Caco-2 (cell line): ENCODE measurements at regions of chr13 and their contacts with region 1.

Region 1: GRCh38 chr13:38763439-38764381 is 76.8 kb downstream of the FREM2 start:
- DNase-seq: peak; percentile 57 to 70
- H3K4me3 ChIP-seq: 0 out of 2 replicates have a peak overlapping the region, but pooled peaks have one; percentile 9
- H3K4me3 Mint-ChIP-seq: peak overlapping the region; percentile 64
- H3K27ac Mint-ChIP-seq: peak overlapping the region; percentile 29
- H3K4me1 ChIP-seq: peaks cover 17% of the 10 kb centered on the region
- H3K4me1 Mint-ChIP-seq: peaks cover 29% of the 10 kb centered on the region
- H3K27me3 ChIP-seq: no peaks in the 10 kb centered on the region
- H3K27me3 Mint-ChIP-seq: no peaks in the 10 kb centered on the region
- CTCF ChIP-seq: peak; percentile 72 to 76

Region 2: DNA sequence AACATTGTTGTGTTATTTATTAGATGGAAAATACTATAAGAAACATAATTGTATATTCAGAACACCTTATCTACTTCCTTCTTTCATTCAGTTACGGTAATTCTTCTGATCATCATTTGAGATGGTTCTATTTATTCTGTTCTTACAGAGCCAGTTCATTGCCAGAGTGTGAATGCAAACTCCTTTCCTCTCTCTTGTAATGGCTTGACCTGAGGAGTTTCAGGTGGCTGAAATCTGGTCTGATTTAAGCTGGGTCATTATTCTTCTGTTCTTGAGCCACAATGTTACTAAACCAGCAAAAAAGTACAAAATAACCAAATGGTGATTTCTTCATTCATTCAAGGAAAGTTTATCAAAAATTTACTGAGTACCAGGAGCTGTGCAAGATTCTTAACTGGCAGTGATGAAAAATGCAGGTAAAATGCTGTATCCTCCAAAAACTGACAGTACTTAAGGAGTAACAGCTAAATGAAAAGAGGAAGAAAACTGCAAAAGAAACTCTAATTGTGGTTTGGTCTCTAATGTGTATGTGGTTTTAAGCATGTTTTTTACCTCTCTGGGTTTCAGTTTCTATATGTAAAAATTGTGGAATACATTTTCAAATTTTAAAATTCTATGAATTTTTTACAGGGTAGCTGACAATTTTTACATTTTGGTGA is 596.4 kb before region 1 on chr13:
- CTCF ChIA-PET with region 1: no interaction called
- POLR2A ChIA-PET with region 1: no interaction called
- intact Hi-C with region 1: no loop called
- DNase-seq: no peak
- H3K4me3 ChIP-seq: no peak overlapping the region
- H3K4me3 Mint-ChIP-seq: no peak overlapping the region
- H3K27ac Mint-ChIP-seq: no peak overlapping the region
- H3K4me1 ChIP-seq: no peaks in the 10 kb centered on the region
- H3K4me1 Mint-ChIP-seq: no peaks in the 10 kb centered on the region
- H3K27me3 ChIP-seq: no peaks in the 10 kb centered on the region
- H3K27me3 Mint-ChIP-seq: no peaks in the 10 kb centered on the region
- CTCF ChIP-seq: no peak

Region 3: GRCh38 chr13:38577048-38577447 is 186.7 kb before region 1 on chr13:
- CTCF ChIA-PET with region 1: interaction called, 3 read pairs
- POLR2A ChIA-PET with region 1: no interaction called
- intact Hi-C with region 1: loop called (anchors 1 kb)
- DNase-seq: peak in 1 of 2 experiments; percentile 44
- H3K4me3 ChIP-seq: no peak overlapping the region
- H3K4me3 Mint-ChIP-seq: no peak overlapping the region
- H3K27ac Mint-ChIP-seq: no peak overlapping the region
- H3K4me1 ChIP-seq: no peaks in the 10 kb centered on the region
- H3K4me1 Mint-ChIP-seq: peaks cover 6% of the 10 kb centered on the region
- H3K27me3 ChIP-seq: no peaks in the 10 kb centered on the region
- H3K27me3 Mint-ChIP-seq: peaks cover 5% of the 10 kb centered on the region
- CTCF ChIP-seq: peak; percentile 17 to 22

Region 4: DNA sequence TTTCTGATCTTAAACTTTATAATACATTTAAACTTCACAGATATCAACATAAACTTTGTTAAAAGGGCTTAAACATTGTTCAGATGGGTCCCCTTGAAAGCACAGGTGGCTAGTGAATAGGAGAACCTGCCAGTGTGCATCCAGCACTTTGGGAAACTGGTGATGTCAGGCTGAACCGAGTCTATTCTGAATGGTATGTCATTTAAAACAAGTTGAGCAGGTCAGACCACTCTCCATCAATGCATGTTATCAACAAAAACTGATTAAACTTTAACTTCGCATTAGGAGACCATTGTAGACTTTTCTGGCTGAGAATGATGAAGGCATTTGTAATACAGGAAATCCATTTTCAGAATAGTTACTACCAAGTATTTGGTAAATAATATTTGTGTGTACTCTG is 126.9 kb before region 1 on chr13:
- CTCF ChIA-PET with region 1: interaction called, 3 read pairs
- POLR2A ChIA-PET with region 1: no interaction called
- intact Hi-C with region 1: loop called (anchors 1 kb)
- DNase-seq: peak; percentile 77 to 84
- H3K4me3 ChIP-seq: no peak overlapping the region
- H3K4me3 Mint-ChIP-seq: peak overlapping the region; percentile 56
- H3K27ac Mint-ChIP-seq: peak overlapping the region; percentile 49
- H3K4me1 ChIP-seq: peaks cover 54% of the 10 kb centered on the region
- H3K4me1 Mint-ChIP-seq: peaks cover 47% of the 10 kb centered on the region
- H3K27me3 ChIP-seq: no peaks in the 10 kb centered on the region
- H3K27me3 Mint-ChIP-seq: no peaks in the 10 kb centered on the region
- CTCF ChIP-seq: no peak

Region 5: GRCh38 chr13:38670627-38671026 is 93.1 kb before region 1 on chr13:
- CTCF ChIA-PET with region 1: no interaction called
- POLR2A ChIA-PET with region 1: no interaction called
- intact Hi-C with region 1: loop called (anchors 1 kb)
- DNase-seq: peak in 1 of 2 experiments; percentile 11
- H3K4me3 ChIP-seq: no peak overlapping the region
- H3K4me3 Mint-ChIP-seq: no peak overlapping the region
- H3K27ac Mint-ChIP-seq: no peak overlapping the region
- H3K4me1 ChIP-seq: peaks cover 12% of the 10 kb centered on the region
- H3K4me1 Mint-ChIP-seq: peaks cover 7% of the 10 kb centered on the region
- H3K27me3 ChIP-seq: no peaks in the 10 kb centered on the region
- H3K27me3 Mint-ChIP-seq: no peaks in the 10 kb centered on the region
- CTCF ChIP-seq: peak in 1 of 2 experiments; percentile 3

Region 6: GRCh38 chr13:38842523-38842922 is 78.8 kb after region 1 on chr13:
- CTCF ChIA-PET with region 1: no interaction called
- POLR2A ChIA-PET with region 1: interaction called, 3 read pairs
- intact Hi-C with region 1: loop called (anchors 5 kb)
- DNase-seq: no peak
- H3K4me3 ChIP-seq: no peak overlapping the region
- H3K4me3 Mint-ChIP-seq: no peak overlapping the region
- H3K27ac Mint-ChIP-seq: peak overlapping the region; percentile 31
- H3K4me1 ChIP-seq: peaks cover 41% of the 10 kb centered on the region
- H3K4me1 Mint-ChIP-seq: peaks cover 22% of the 10 kb centered on the region
- H3K27me3 ChIP-seq: no peaks in the 10 kb centered on the region
- H3K27me3 Mint-ChIP-seq: no peaks in the 10 kb centered on the region
- CTCF ChIP-seq: no peak

Region 7: GRCh38 chr13:38914070-38914469 is 150.4 kb after region 1 on chr13:
- CTCF ChIA-PET with region 1: no interaction called
- POLR2A ChIA-PET with region 1: no interaction called
- intact Hi-C with region 1: loop called (anchors 5 kb)
- DNase-seq: no peak
- H3K4me3 ChIP-seq: no peak overlapping the region
- H3K4me3 Mint-ChIP-seq: no peak overlapping the region
- H3K27ac Mint-ChIP-seq: no peak overlapping the region
- H3K4me1 ChIP-seq: peaks cover 5% of the 10 kb centered on the region
- H3K4me1 Mint-ChIP-seq: peaks cover 6% of the 10 kb centered on the region
- H3K27me3 ChIP-seq: no peaks in the 10 kb centered on the region
- H3K27me3 Mint-ChIP-seq: peaks cover 4% of the 10 kb centered on the region
- CTCF ChIP-seq: no peak